Activated naive CD8-positive, alpha-beta T cell treated with anti-CD3 and anti-CD28 coated beads, Interleukin-2, amount 10 ng/mL, durations not matched to agents 7 days and 5 days (primary cell): ENCODE measurements at regions of chr1 and their contacts with region 1.

Region 1: GRCh38 chr1:28642847-28643635 is at the start of gene TAF12:
- DNase-seq: peak; percentile 90
- ATAC-seq: peak; percentile 86
- H3K4me3 Mint-ChIP-seq: peak within 1 kb of the TSS; percentile 98
- H3K27ac Mint-ChIP-seq: peak within 1 kb of the TSS; percentile 99
- H3K4me1 Mint-ChIP-seq: peaks cover 37% of the 10 kb centered on the region
- H3K27me3 Mint-ChIP-seq: no peaks in the 10 kb centered on the region
- total RNA-seq, gene TAF12: 29.9 to 30.5 TPM

Region 2: DNA sequence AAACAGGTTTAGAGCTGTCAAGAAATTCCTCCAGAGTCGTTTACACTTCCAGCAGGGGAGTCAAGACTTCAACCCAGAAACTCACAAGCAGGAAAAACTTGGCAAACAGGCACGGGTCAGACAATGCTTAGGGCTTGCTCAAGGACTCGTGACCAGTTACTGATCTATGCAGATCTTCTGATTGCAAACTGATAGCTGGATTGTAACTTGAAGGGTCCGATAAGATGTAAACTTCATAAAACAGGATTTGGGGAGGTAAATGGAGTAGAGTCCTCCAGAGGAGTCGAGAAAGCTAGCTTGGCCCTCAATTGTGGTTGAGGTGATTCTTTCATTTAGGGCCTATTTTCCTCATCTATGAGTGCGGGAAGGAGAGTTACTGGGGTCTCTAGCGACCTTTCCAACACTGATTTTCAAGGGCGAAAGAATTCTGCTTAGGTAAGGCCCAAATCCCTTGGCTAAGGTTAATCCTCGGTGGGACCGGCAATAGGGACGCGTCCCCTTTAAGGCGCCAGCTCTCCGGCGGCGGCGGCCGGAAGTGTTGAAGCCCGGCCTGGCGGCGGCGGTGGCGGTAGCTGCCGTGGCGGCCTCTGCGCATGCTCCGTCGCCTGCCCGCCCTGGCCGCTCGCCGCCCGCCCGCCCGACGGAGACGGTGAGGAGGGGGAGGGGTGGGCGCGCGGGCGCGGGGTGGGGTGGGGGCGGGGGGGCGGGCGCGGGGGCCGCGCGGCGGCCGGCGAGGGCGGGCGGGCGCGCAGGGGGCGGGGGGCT is 25.3 kb after region 1 on chr1 and contains the start of gene GMEB1:
- POLR2A ChIA-PET with region 1: interaction called, 175 read pairs
- DNase-seq: peak; percentile 92
- ATAC-seq: peak; percentile 76
- H3K4me3 Mint-ChIP-seq: peak within 1 kb of the TSS; percentile 91
- H3K27ac Mint-ChIP-seq: peak within 1 kb of the TSS; percentile 97
- H3K4me1 Mint-ChIP-seq: peaks cover 13% of the 10 kb centered on the region
- H3K27me3 Mint-ChIP-seq: no peaks in the 10 kb centered on the region
- total RNA-seq, gene GMEB1: 31.7 to 32.7 TPM

Region 3: GRCh38 chr1:28804071-28804470 is 161.0 kb after region 1 on chr1:
- POLR2A ChIA-PET with region 1: no interaction called
- DNase-seq: no peak
- ATAC-seq: no peak
- H3K4me3 Mint-ChIP-seq: no peak overlapping the region
- H3K27ac Mint-ChIP-seq: no peak overlapping the region
- H3K4me1 Mint-ChIP-seq: no peaks in the 10 kb centered on the region
- H3K27me3 Mint-ChIP-seq: peaks cover 13% of the 10 kb centered on the region

Region 4: DNA sequence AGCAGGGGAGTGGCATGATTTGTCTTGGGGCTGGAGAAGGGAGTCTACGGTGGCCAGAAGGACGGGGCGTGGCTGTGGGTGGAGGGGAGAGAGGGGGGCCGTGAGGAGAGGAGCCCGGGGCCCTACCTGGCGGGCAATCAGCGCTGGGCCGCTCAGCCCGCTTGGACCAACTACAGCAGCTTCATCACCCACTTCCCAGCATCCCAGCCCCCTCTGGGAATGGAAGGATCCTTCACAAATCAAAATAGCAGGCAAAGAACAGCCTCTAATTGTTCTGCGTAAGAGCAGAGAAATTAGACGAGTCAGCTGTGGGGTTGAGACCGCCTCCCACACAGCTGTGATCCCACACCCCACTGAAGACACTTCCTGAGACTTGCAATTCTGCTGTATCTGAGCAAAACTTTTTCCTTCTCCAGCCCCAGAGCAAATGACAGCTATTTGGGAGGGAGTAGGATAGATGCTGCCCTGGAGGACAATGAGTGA is 212.5 kb after region 1 on chr1:
- POLR2A ChIA-PET with region 1: no interaction called
- DNase-seq: no peak
- ATAC-seq: no peak
- H3K4me3 Mint-ChIP-seq: no peak overlapping the region
- H3K27ac Mint-ChIP-seq: no peak overlapping the region
- H3K4me1 Mint-ChIP-seq: peaks cover 6% of the 10 kb centered on the region
- H3K27me3 Mint-ChIP-seq: peaks cover 7% of the 10 kb centered on the region